ENCODE measurements at regions of chr17 and their contacts with region 1.

Region 1: DNA sequence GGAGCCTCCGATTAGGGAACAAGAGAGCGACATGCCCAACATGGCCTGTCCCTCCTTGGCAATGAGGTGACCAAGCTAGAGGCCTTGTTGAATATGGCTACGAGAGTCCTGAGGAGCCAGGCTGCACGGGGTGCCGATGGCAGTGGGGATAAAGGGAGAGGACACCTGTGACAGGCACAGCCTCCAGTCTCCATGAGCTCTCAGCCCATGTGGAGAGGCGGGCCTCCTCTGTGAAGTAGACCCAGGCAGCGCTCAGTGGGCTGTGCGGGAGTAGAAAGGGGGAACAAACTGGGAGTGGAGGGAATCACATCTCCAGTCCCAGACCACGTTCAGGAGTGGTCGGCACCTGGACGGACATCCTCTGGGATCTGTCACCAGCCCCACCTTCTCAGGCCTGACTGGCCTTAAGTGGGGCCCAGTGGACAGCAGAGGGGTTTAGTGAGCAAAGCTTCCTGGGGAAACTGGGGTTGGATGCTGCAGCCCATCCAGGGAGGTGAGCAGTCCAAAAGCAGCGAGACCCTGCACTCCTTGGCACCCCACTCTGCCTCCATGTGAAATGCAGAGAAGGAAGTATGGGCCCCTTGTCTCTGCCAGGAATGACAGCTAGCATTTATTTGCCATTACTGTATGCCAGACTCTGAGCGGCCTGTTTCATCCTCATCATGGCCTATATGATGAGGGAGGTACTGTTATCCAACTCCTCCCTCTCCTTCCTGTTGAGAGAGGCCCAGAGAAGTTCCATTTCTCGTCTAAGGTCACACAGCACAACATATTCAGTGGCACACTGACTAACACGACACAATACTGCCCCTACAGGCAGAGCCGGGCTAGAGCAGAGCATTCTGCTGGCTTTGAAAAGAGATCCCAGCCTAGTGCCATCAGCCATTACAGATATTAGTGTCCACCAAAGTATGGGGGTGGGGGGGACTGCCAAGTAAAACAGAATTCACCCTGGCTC is 4.5 kb upstream of the TMEM92 start:
- DNase-seq: peak; percentile 61
- ATAC-seq: peak; percentile 77
- H3K4me3 ChIP-seq: no peak overlapping the region
- H3K27ac ChIP-seq: no peak overlapping the region
- H3K4me1 ChIP-seq: peaks cover 31% of the 10 kb centered on the region
- H3K27me3 ChIP-seq: peaks cover 10 to 73% of the 10 kb centered on the region in 2 experiments; a peak in 4 of 5 replicates
- CTCF ChIP-seq: peak; percentile 76
- EP300 ChIP-seq: no peak
- POLR2A ChIP-seq: no peak
- RAD21 ChIP-seq: peak; percentile 77

Region 2: DNA sequence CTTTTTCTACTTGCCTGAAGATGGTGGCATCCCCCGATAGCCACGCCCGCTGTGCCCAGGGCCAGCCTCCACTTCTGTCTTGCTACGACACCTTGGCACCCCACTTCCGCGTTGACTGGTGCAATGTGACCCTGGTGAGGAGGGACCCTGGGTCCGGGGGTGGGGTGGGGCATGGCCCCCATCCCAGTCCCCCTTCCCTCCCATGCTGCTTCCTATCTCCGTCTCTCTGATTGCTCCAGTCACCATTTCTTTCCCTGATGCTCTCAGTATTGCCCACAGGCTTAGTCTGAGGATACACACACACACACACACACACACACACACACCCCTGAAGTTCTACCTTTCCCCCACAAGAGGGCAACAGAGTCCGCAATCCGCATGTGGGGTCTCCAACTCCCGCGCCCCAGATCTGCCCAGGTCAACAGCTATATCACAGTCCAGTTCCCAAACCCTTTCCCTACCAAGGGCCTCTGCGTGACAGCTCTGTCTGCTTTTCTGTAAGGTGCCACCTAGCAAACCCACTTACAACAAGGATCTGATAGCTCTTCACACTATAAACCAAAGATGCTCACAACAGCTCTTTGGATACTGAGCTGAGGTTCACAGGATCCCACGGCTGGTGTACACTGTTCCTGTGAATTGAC is 100.5 kb before region 1 on chr17:
- CTCF ChIA-PET with region 1: interaction called, 11 read pairs
- POLR2A ChIA-PET with region 1: no interaction called
- in situ Hi-C with region 1: no loop called
- intact Hi-C with region 1: no loop called
- DNase-seq: peak; percentile 69
- ATAC-seq: peak; percentile 58
- H3K4me3 ChIP-seq: no peak overlapping the region
- H3K27ac ChIP-seq: no peak overlapping the region
- H3K4me1 ChIP-seq: peaks cover 33% of the 10 kb centered on the region
- H3K27me3 ChIP-seq: peaks cover 10 to 46% of the 10 kb centered on the region in 2 experiments; a peak in 3 of 5 replicates
- CTCF ChIP-seq: peak; percentile 92
- EP300 ChIP-seq: no peak
- POLR2A ChIP-seq: no peak
- RAD21 ChIP-seq: peak; percentile 92

Region 3: DNA sequence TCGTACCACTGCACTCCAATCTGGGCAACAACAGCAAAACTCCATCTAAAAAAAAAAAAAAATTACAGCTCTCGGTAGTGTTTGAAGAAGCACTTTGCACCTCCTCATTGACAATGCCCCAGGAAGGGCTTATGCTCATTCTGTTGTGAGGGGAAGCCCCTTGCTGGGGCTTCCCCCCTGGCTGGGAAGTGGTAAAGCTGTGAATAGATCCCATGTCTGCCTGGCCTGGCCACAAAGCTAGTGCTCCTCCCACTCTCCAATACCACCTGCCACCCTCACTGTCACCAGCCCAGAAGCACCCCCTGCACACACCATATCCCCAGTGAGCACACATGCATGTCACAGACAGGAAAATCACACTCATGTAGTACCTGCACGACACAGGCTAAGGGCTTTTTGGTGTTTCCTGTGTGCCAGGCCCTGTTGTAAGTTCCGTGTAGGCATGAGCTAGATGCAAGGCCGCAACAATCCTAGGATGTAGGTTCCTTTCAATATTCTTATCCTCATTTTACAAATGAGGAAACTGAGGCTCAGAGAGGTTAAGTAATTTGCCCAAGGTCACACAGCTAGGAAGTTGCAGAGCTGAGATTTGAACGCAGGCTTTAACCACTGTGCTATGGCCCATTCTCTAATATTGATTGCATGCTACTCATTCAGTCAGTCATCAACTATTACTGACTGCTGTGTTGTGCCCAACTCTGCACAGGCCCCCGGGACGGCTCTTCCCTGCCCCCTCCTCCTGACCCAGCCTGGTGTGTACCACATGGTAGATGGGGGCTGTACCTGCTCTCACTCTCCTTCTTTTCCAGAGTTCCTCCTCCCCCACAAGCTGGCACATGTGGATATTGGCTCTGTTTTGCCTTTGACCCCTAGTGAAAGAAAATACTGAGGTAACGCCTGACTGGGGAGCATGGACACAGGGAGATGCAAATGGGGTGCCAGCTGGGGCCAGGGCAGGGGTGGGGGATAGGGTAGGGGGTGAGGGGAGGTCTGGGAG is 56.4 kb before region 1 on chr17:
- CTCF ChIA-PET with region 1: no interaction called
- POLR2A ChIA-PET with region 1: no interaction called
- in situ Hi-C with region 1: loop called (anchors 5 kb)
- intact Hi-C with region 1: no loop called
- DNase-seq: peak; percentile 73
- ATAC-seq: peak; percentile 54
- H3K4me3 ChIP-seq: no peak overlapping the region
- H3K27ac ChIP-seq: no peak overlapping the region
- H3K4me1 ChIP-seq: peaks cover 68% of the 10 kb centered on the region
- H3K27me3 ChIP-seq: peaks cover 0 to 32% of the 10 kb centered on the region in 2 experiments; a peak in 4 of 5 replicates
- CTCF ChIP-seq: peak; percentile 41
- EP300 ChIP-seq: no peak
- POLR2A ChIP-seq: no peak
- RAD21 ChIP-seq: no peak; the same call in 1 of the 2 replicates

Measured in HepG2 (cell line).